ENCODE measurements at regions of chr11 and their contacts with region 1.

Region 1: GRCh38 chr11:94400839-94401772 is at the start of gene GPR83:
- DNase-seq: no peak
- H3K4me3 Mint-ChIP-seq: peak within 1 kb of the TSS; percentile 13
- H3K27ac Mint-ChIP-seq: no peak within 1 kb of the TSS
- H3K4me1 Mint-ChIP-seq: peaks cover 8% of the 10 kb centered on the region
- H3K27me3 Mint-ChIP-seq: peaks cover 28% of the 10 kb centered on the region
- total RNA-seq, gene GPR83: 0.15 TPM in 1 of 2 replicates, not detected in the other

Region 2: DNA sequence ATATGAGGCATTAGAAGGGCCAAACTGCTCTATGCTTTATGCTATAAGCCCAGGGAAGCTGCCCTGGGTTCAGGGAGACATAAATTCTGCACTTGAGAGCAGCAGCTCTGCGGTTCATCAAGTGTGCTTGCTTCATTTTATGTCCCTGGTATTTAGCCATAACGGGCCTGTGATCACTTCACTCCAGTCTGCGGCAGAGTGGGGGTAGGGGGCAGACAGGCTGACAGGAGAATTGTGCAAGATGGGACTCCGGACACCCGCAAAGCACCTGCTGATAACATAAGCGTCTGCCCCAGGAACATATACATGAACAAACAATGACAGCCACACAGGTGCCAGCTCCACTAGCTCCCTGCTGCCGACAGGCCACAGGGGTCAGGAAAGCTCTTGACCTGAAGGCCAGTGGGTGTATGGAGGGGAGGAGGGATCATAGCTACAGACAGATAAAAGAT is 914.0 kb before region 1 on chr11:
- intact Hi-C with region 1: loop called (anchors 10 kb)
- DNase-seq: no peak
- H3K4me3 Mint-ChIP-seq: no peak overlapping the region
- H3K27ac Mint-ChIP-seq: no peak overlapping the region
- H3K4me1 Mint-ChIP-seq: no peaks in the 10 kb centered on the region
- H3K27me3 Mint-ChIP-seq: no peaks in the 10 kb centered on the region

Region 3: GRCh38 chr11:93842461-93842860 is 558.6 kb before region 1 on chr11:
- intact Hi-C with region 1: no loop called
- DNase-seq: no peak
- H3K4me3 Mint-ChIP-seq: no peak overlapping the region
- H3K27ac Mint-ChIP-seq: no peak overlapping the region
- H3K4me1 Mint-ChIP-seq: no peaks in the 10 kb centered on the region
- H3K27me3 Mint-ChIP-seq: peaks cover 4% of the 10 kb centered on the region